PC-3 (cell line): ENCODE measurements at regions of chr19 and their contacts with region 1.

Region 1: GRCh38 chr19:40974633-40975037 is 16.4 kb upstream of the CYP2B6 start:
- DNase-seq: peak; percentile 74
- ATAC-seq: peak; percentile 74
- H3K4me3 ChIP-seq: no peak overlapping the region
- H3K27ac ChIP-seq: no peak overlapping the region
- H3K4me1 ChIP-seq: no peaks in the 10 kb centered on the region
- H3K27me3 ChIP-seq: no peaks in the 10 kb centered on the region
- CTCF ChIP-seq: peak; percentile 65

Region 2: DNA sequence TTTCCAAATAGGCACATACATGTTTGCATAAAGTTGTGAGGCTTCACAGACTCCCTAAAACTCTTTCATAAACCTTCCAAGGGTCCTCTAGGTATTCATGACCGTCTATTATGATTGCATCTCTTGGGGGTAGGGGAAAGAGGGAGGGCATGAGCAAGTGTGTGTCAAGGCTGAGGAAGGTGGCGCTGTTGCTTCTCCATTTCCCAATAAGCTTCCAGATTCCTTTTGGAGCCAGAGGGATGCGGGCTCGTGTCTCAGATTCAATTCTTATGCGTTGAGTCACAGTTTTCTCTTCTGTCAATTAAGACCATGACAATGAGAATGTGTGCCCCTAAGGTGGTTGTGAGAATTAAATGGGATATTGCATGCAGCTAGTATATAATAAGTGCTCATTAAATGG is 41.6 kb before region 1 on chr19:
- CTCF ChIA-PET with region 1: no interaction called
- POLR2A ChIA-PET with region 1: no interaction called
- intact Hi-C with region 1: no loop called
- DNase-seq: peak; percentile 66
- ATAC-seq: no peak
- H3K4me3 ChIP-seq: no peak overlapping the region
- H3K27ac ChIP-seq: no peak overlapping the region
- H3K4me1 ChIP-seq: no peaks in the 10 kb centered on the region; the same call in 1 of the 2 replicates
- H3K27me3 ChIP-seq: no peaks in the 10 kb centered on the region
- CTCF ChIP-seq: peak; percentile 49; the same call in 1 of the 2 replicates

Region 3: DNA sequence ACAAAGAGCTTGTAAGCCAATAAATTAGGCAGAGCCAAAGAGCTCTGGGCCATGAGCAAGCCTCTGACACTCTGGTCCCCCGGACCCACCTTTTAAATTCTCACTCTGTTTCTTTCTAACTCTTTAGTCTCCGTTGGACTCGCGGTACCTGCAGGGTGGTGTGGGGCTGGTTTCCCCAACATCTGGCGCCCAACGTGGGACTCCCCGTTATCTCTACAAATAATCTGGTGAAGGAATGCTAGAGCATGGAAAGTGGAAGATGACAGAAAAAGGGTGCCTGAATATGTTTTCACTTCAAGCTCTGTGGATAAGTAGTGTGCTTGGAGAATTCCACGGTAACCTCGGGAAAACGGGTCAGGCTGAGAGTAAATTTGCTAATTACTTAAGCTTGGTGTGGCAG is 20.1 kb before region 1 on chr19:
- CTCF ChIA-PET with region 1: interaction called, 11 read pairs
- POLR2A ChIA-PET with region 1: no interaction called
- intact Hi-C with region 1: no loop called
- DNase-seq: no peak
- ATAC-seq: no peak
- H3K4me3 ChIP-seq: no peak overlapping the region
- H3K27ac ChIP-seq: no peak overlapping the region
- H3K4me1 ChIP-seq: no peaks in the 10 kb centered on the region
- H3K27me3 ChIP-seq: no peaks in the 10 kb centered on the region
- CTCF ChIP-seq: no peak

Region 4: DNA sequence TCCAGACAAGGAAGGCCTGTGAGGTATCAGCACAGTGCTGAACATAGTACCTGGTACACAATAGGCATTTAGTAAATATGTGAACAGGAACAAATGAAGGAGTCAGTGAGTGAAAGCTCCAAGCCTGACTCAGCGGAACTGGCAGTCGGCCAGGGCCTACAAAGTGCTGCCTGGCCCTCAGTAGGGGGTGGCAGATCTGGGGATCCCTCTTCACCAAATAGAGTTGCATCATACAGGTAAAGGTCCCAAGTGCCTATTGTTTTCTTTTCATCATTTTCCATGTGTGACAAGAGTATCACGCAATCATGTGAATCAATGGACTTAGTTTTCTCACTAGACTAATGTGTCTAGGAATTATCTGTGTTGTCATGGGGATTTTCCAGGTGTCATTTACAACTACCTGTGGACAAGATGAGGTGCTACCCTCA is 25.7 kb after region 1 on chr19:
- CTCF ChIA-PET with region 1: no interaction called
- POLR2A ChIA-PET with region 1: no interaction called
- intact Hi-C with region 1: no loop called
- DNase-seq: peak; percentile 92
- ATAC-seq: peak; percentile 89
- H3K4me3 ChIP-seq: no peak overlapping the region
- H3K27ac ChIP-seq: peak overlapping the region; percentile 73
- H3K4me1 ChIP-seq: peaks cover 20% of the 10 kb centered on the region
- H3K27me3 ChIP-seq: no peaks in the 10 kb centered on the region
- CTCF ChIP-seq: no peak

Region 5: DNA sequence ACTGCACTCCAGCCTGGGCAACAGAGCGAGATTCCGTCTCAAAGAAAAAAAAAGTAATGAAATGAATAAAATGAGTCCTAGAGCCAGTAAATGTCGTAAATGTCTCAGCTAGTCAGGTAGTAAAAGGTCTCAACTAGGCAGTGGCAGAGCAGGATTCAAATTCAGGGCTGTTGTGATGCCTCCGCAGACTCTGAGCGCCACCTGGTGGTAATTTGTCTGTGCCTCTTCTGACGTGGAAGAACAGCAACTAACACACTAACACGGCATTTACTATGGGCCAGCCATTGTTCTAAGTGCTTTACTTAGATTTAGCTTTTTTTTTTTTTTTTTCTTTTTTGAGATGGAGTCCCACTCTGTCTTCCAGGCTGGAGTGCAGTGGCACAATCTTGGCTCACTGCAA is 169.8 kb after region 1 on chr19:
- CTCF ChIA-PET with region 1: no interaction called
- POLR2A ChIA-PET with region 1: no interaction called
- intact Hi-C with region 1: loop called (anchors 2 kb)
- DNase-seq: peak; percentile 85
- ATAC-seq: peak; percentile 64
- H3K4me3 ChIP-seq: no peak overlapping the region
- H3K27ac ChIP-seq: no peak overlapping the region
- H3K4me1 ChIP-seq: no peaks in the 10 kb centered on the region
- H3K27me3 ChIP-seq: no peaks in the 10 kb centered on the region
- CTCF ChIP-seq: peak; percentile 76